ENCODE measurements at regions of chr10 and their contacts with region 1.

Region 1: DNA sequence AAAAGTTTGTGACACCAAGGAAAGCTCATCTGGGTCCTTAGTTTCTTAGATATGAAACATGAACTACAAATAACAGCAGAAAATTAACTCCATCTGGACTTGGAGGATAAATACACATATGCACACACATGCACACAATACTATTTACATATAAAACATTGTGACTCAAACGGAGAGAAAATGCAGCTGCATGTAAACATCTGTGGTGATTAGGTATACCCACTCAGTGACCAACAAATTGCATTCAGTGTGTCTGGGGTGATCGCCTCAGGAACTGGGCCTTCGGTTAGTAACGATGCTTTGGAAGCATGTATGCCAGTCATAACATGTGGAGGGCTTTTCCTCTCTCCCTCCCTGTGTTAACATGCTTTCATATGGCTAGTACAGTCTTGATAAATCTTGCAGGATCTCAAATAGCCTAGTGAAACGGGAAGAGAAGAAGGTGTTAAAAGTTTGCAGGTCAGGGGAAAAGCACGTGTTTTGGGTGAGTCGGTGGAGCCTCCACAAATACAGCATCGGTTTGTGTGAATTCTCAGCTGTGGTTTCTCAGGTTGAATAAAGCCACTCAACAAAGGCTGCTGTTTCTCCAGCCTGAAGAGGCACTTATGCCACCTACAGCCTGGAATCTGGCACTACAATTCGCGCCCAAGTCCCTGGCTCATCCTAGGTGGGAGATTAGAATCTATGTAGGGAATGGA is 8.7 kb upstream of the GLRX3 start:
- DNase-seq: peak; percentile 33 to 80
- ATAC-seq: peak; percentile 87 to 98 (median 97)
- H3K4me3 ChIP-seq: no peak overlapping the region
- H3K4me3 Mint-ChIP-seq: no peak overlapping the region
- H3K27ac ChIP-seq: no peak overlapping the region
- H3K27ac Mint-ChIP-seq: peak overlapping the region in 1 of 2 donors; percentile 8
- H3K4me1 ChIP-seq: peaks cover 5% of the 10 kb centered on the region
- H3K4me1 Mint-ChIP-seq: peaks cover 12 to 14% of the 10 kb centered on the region in 2 donors
- H3K27me3 ChIP-seq: peaks cover 3% of the 10 kb centered on the region
- H3K27me3 Mint-ChIP-seq: peaks cover 7 to 11% of the 10 kb centered on the region in 2 donors
- CTCF ChIP-seq: peak; percentile 77

Region 2: DNA sequence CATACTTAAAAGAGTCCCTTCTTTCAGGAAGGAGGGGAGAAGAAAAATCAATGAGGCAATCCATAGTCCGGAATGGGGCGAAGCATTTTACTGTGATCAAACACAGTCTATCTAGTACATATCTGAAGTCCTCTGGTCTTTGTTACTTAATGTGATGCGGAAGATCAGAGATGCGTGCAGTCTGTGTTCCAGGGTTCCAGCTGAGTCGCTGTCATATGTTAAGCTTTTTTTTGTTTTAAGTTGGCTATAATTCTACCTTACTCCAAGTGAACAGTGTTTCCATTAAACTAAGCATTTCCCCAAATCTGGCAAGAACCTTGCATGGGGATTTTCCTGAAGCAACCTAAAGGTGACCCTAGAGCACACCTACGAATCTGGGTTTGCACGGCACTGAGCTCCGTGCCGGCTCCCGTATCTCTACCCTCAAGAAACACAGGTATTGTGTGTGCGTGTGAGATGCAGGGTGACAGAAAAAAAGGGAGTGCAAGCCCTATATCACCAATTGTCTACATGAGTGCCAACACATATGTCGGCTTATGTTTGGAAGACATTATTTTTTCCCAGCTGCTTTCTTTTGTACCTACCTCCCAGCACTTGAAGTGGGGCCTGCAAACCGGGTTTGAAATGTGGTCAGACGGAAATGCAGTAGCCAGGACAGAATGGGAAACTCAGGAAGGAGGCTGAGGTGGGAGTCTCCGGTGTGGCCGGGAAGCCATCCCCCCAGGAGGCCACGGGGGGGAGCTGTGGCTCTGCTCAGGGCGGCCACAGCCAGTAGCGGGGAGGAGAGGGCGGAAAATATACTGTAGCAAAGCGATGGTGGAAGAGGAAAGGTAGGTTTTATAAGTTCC is 1096.3 kb before region 1 on chr10:
- intact Hi-C with region 1: loop called (anchors 5 kb)
- DNase-seq: peak in 1 of 2 donors; percentile 76
- ATAC-seq: peak; percentile 63 to 71 (median 65)
- H3K4me3 ChIP-seq: no peak overlapping the region
- H3K4me3 Mint-ChIP-seq: no peak overlapping the region
- H3K27ac ChIP-seq: no peak overlapping the region
- H3K27ac Mint-ChIP-seq: no peak overlapping the region
- H3K4me1 ChIP-seq: peaks cover 18% of the 10 kb centered on the region
- H3K4me1 Mint-ChIP-seq: peaks cover 22 to 23% of the 10 kb centered on the region in 2 donors
- H3K27me3 ChIP-seq: peaks cover 19% of the 10 kb centered on the region
- H3K27me3 Mint-ChIP-seq: peaks cover 28 to 79% of the 10 kb centered on the region in 2 donors
- CTCF ChIP-seq: peak; percentile 71

Region 3: GRCh38 chr10:129877773-129878371 is 249.6 kb before region 1 on chr10:
- intact Hi-C with region 1: loop called (anchors 2 kb)
- DNase-seq: peak in 1 of 2 donors; percentile 60
- ATAC-seq: peak in 2 of 3 donors; percentile 36 to 65
- H3K4me3 ChIP-seq: no peak overlapping the region
- H3K4me3 Mint-ChIP-seq: no peak overlapping the region
- H3K27ac ChIP-seq: no peak overlapping the region
- H3K27ac Mint-ChIP-seq: no peak overlapping the region
- H3K4me1 ChIP-seq: no peaks in the 10 kb centered on the region
- H3K4me1 Mint-ChIP-seq: no peaks in the 10 kb centered on the region
- H3K27me3 ChIP-seq: no peaks in the 10 kb centered on the region
- H3K27me3 Mint-ChIP-seq: peaks cover 0 to 3% of the 10 kb centered on the region in 2 donors
- CTCF ChIP-seq: peak; percentile 33

Region 4: GRCh38 chr10:129971381-129972144 is 155.9 kb before region 1 on chr10:
- intact Hi-C with region 1: no loop called
- DNase-seq: peak in 1 of 2 donors; percentile 61
- ATAC-seq: peak in 2 of 3 donors; percentile 50 to 70
- H3K4me3 ChIP-seq: no peak overlapping the region
- H3K4me3 Mint-ChIP-seq: peak overlapping the region; percentile 58
- H3K27ac ChIP-seq: no peak overlapping the region
- H3K27ac Mint-ChIP-seq: no peak overlapping the region
- H3K4me1 ChIP-seq: no peaks in the 10 kb centered on the region
- H3K4me1 Mint-ChIP-seq: peaks cover 0 to 6% of the 10 kb centered on the region in 2 donors
- H3K27me3 ChIP-seq: peaks cover 41% of the 10 kb centered on the region
- H3K27me3 Mint-ChIP-seq: peaks cover 51 to 53% of the 10 kb centered on the region in 2 donors
- CTCF ChIP-seq: no peak

Region 5: DNA sequence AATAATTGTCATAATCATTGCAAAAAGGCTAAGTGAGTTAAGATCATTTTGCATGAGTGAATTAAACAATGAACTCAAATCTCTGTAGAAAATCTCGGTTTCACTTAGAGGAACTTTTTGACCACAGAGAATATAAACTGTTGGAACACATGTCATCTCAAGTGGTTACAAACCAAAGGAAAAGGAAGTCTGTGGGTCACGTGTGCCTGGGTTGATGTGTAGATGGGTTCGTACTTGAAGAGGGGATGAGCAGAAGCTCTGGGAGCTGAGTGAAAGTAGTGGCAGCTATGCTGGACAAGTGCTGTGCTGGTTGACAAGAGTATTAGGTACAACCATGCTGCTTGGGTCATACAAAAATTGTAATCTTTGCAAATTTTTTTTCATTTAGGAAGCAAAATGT is 43.7 kb after region 1 on chr10:
- intact Hi-C with region 1: no loop called
- DNase-seq: peak in 1 of 2 donors; percentile 68
- ATAC-seq: peak in 1 of 3 donors; percentile 59
- H3K4me3 ChIP-seq: no peak overlapping the region
- H3K4me3 Mint-ChIP-seq: peak overlapping the region; percentile 43
- H3K27ac ChIP-seq: no peak overlapping the region
- H3K27ac Mint-ChIP-seq: peak overlapping the region in 1 of 2 donors; percentile 17
- H3K4me1 ChIP-seq: peaks cover 30% of the 10 kb centered on the region
- H3K4me1 Mint-ChIP-seq: peaks cover 32 to 36% of the 10 kb centered on the region in 2 donors
- H3K27me3 ChIP-seq: no peaks in the 10 kb centered on the region
- H3K27me3 Mint-ChIP-seq: no peaks in the 10 kb centered on the region
- CTCF ChIP-seq: no peak

Region 6: DNA sequence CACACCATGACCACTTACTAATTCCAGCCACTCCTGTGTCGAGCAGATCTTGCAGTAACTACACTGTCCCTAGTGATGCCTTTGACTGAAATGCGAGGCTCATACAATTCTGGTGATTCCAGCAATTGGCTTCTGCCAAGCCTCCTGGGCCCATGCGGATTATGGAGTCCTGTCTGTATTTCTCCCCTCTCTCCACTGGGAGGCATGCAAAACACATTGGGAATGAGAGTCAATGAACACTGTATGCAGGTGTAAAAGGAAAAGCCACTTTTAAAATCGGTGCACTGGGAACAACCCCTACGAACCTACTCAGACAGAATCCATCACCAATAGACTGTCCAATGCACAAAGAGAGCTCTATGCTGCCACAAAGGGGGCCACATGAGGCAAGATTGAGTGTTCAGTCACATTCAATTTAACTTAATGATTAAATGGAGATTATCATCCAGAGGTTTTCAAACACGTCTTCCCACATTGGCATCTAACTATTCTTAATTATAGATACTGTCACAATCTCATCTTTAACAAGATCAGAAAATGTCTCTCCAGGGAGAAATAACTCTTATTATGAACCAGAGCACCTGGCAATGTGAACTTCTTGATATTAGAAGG is 559.3 kb after region 1 on chr10:
- intact Hi-C with region 1: no loop called
- DNase-seq: no peak
- ATAC-seq: no peak
- H3K4me3 ChIP-seq: no peak overlapping the region
- H3K4me3 Mint-ChIP-seq: no peak overlapping the region
- H3K27ac ChIP-seq: no peak overlapping the region
- H3K27ac Mint-ChIP-seq: no peak overlapping the region
- H3K4me1 ChIP-seq: no peaks in the 10 kb centered on the region
- H3K4me1 Mint-ChIP-seq: no peaks in the 10 kb centered on the region
- H3K27me3 ChIP-seq: no peaks in the 10 kb centered on the region
- H3K27me3 Mint-ChIP-seq: no peaks in the 10 kb centered on the region
- CTCF ChIP-seq: no peak

Measured in natural killer cell (primary cell).